GM13976 (cell line): ENCODE measurements at regions of chrX and their contacts with region 1.

Region 1: GRCh38 chrX:20066968-20067708 is 49.6 kb downstream of the MAP7D2 start:
- DNase-seq: peak; percentile 62
- CTCF ChIP-seq: peak; percentile 39

Region 2: GRCh38 chrX:19382555-19383145 is 684.5 kb before region 1 on chrX:
- in situ Hi-C with region 1: loop called (anchors 25 kb)
- DNase-seq: peak; percentile 64
- CTCF ChIP-seq: peak; percentile 44

Region 3: DNA sequence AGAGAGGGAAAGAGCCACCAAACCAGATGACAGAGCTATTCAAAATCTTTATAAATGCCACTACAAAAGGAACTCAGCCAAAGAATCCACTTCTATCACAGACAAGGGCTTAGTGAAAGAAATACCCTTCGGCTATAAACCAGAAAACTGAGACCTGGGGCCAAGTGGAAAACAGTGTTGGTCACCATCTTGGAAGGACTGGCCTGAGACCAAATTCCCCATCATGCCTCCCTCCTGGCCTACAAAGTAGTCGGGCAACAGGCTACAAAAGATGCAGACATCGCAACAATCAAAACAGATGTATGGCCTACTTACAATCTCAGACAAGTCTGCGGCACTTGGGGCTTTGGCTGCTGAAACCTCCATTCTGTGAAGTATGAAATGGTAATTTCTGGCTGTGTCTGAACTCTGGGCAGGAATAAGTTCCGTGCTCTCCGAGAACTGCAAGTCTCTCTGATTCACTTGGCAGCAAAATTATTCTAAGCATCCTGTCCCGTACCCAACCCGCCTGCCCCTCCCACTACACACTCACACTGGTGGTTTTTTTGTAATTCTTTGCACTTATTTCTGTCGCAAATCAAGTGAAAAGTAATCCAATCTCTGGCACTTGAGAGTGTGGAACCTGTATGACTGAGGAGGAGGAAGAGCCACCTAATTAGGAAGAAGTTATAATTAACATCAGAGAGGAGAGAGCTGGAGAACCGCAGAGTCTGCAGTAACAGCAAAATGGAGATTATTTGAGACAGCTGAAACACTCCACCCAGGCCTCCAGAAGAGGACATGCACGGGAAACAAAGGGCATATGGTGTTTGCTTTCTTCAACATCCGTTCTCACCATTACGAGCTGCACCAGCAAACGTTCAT is 267.6 kb before region 1 on chrX:
- in situ Hi-C with region 1: no loop called
- DNase-seq: no peak
- CTCF ChIP-seq: no peak

Region 4: GRCh38 chrX:19904778-19905367 is 162.3 kb before region 1 on chrX:
- in situ Hi-C with region 1: loop called (anchors 25 kb)
- DNase-seq: peak; percentile 67
- CTCF ChIP-seq: peak; percentile 53